AG04449 (cell line): ENCODE measurements at regions of chr15 and their contacts with region 1.

Region 1: GRCh38 chr15:101088788-101089583 is 162.9 kb downstream of the CHSY1 start:
- DNase-seq: no peak
- H3K4me3 ChIP-seq: peak overlapping the region; percentile 15; the same call in 1 of the 2 replicates
- CTCF ChIP-seq: peak; percentile 94

Region 2: DNA sequence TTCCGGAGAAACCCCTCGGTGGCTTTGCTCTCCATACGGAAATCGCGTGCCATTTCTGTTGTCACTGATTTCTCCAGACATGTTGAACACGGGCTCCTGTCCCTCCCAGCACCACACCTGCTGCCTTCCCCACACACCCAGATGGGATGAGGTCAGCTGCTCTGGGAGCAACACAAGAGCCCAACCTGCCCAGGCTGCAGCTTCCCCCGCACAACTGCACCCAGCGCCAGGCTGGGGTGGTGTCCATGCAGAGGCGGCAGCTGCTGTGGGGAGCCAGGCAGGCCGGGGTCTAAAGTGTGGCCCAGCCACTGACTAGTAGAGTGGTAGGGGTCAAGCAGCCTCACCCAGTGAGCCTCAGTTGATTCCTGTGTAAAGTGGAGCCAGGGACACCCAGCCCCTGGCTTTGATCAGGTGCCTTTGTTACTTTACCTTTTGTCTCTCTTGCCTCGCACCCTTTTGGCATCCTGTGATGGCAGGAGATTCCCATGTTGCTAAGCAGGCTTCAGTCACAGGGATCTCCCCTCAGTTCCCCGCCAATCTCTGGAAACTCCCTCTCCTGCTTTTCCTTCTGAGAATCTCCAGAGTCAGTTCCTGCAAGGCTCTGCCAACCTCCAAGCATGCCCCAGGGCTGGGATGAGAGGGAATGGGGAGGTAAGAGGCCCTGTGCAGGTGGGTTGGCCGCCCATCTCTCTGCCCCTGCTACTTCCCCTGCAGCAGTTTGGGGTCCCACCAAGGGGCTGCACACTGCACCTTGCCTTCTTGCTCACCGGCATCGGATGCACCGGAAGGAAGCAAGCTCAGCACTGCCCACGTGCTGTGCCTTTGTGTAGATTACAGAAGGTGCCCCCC is 301.2 kb before region 1 on chr15:
- CTCF ChIA-PET with region 1: no interaction called
- POLR2A ChIA-PET with region 1: no interaction called
- DNase-seq: no peak
- H3K4me3 ChIP-seq: no peak overlapping the region
- CTCF ChIP-seq: no peak

Region 3: DNA sequence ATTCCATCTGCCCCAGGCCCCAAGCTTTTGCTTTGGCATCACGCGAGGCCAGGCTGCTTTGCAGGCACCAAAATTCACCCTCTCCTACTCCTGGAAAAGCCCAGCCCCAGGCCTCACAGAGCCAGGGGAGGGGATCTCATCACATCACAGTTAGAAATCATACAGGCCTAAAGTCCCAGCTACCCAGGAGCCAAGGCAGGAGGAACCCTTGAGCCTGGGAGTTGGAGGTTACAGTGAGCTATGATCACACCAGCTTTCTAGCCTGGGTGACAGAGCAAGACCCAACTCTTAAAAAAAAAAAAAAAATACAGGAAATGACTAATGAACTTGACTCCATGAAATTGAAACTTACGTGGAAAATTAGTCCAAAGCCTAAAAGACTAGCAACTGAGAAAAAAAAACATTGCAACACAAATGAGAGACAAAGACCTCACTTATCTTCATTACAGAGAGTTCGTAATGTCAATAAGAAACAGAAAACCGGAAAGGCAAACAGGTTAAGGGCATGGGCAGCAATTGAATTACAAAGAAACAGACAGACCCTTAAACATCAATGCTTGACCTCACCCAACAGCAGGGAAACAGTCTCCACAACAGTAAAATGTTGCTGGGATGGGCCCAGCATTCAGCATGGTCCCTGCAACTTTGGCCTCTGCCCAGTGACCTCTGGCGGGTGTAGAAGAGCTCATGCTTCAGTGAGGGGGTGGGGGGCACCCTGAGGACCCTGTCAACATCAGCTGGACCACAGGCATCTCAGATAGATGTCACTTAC is 18.3 kb before region 1 on chr15:
- CTCF ChIA-PET with region 1: interaction called, 16 read pairs
- POLR2A ChIA-PET with region 1: no interaction called
- DNase-seq: peak; percentile 52
- H3K4me3 ChIP-seq: no peak overlapping the region
- CTCF ChIP-seq: no peak

Region 4: GRCh38 chr15:101121511-101122090 is 32.6 kb after region 1 on chr15:
- CTCF ChIA-PET with region 1: interaction called, 12 read pairs
- POLR2A ChIA-PET with region 1: interaction called, 3 read pairs
- DNase-seq: no peak
- H3K4me3 ChIP-seq: peak overlapping the region; percentile 38
- CTCF ChIP-seq: peak; percentile 58

Region 5: GRCh38 chr15:101251830-101252820 is 163.1 kb after region 1 on chr15 and contains the start of gene CHSY1:
- CTCF ChIA-PET with region 1: interaction called, 278 read pairs
- POLR2A ChIA-PET with region 1: interaction called, 3 read pairs
- DNase-seq: peak; percentile 46
- H3K4me3 ChIP-seq: peak within 1 kb of the TSS; percentile 72
- CTCF ChIP-seq: peak; percentile 18